ENCODE measurements at regions of chr1 and their contacts with region 1.

Region 1: DNA sequence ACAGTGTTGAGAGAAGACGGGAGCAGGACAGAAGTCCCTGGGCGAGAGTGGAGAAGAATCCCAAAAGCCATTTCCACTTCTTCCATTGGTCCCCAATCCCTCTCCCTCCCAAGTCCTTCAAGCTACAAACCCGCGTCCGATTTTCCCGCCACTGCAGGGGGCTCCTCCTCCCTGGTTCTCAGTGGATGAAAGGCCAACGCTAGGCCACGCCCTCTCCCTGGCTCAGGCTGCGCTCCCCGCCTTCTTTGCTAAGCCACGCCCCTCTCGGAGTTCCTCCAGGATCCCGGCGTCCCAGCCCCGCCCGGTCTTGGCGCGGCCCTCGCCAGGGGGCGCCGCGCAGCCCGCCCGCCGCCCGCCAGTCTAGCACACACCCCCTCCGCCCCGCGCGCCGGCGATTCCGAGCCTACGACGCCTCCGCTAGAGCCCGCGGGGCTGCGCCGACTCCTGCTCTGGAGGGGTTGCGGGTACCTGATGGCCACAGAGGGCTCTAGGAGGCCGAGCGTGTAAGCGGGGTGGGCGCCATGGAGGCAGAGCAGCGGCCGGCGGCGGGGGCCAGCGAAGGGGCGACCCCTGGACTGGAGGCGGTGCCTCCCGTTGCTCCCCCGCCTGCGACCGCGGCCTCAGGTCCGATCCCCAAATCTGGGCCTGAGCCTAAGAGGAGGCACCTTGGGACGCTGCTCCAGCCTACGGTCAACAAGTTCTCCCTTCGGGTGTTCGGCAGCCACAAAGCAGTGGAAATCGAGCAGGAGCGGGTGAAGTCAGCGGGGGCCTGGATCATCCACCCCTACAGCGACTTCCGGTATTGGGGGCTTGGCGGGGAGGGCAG is at the start of gene HCN3:
- DNase-seq: peak; percentile 98 to 99
- H3K4me3 ChIP-seq: peak within 1 kb of the TSS; percentile 87
- H3K4me3 Mint-ChIP-seq: peak within 1 kb of the TSS; percentile 47
- H3K27ac Mint-ChIP-seq: no peak within 1 kb of the TSS
- H3K4me1 ChIP-seq: 0 out of 2 replicates have a peak, but pooled peaks cover 8% of the 10 kb centered on the region
- H3K4me1 Mint-ChIP-seq: peaks cover 25% of the 10 kb centered on the region
- H3K27me3 ChIP-seq: no peaks in the 10 kb centered on the region
- H3K27me3 Mint-ChIP-seq: no peaks in the 10 kb centered on the region
- CTCF ChIP-seq: peak; percentile 47 to 79
- total RNA-seq, gene HCN3: 8.0 and 8.8 TPM in 2 replicates

Region 2: GRCh38 chr1:154982897-154983648 is 294.2 kb before region 1 on chr1 and contains the start of gene FLAD1:
- CTCF ChIA-PET with region 1: no interaction called
- POLR2A ChIA-PET with region 1: no interaction called
- intact Hi-C with region 1: no loop called
- DNase-seq: peak; percentile 98 to 100
- H3K4me3 ChIP-seq: peak within 1 kb of the TSS; percentile 82
- H3K4me3 Mint-ChIP-seq: no peak within 1 kb of the TSS
- H3K27ac Mint-ChIP-seq: no peak within 1 kb of the TSS
- H3K4me1 ChIP-seq: no peaks in the 10 kb centered on the region; the same call in 1 of the 2 replicates
- H3K4me1 Mint-ChIP-seq: no peaks in the 10 kb centered on the region
- H3K27me3 ChIP-seq: no peaks in the 10 kb centered on the region
- H3K27me3 Mint-ChIP-seq: no peaks in the 10 kb centered on the region
- CTCF ChIP-seq: no peak
- total RNA-seq, gene FLAD1: 51.3 and 61.5 TPM in 2 replicates

Region 3: GRCh38 chr1:155172732-155173477 is 104.4 kb before region 1 on chr1 and contains the start of gene KRTCAP2:
- CTCF ChIA-PET with region 1: interaction called, 10 read pairs
- POLR2A ChIA-PET with region 1: no interaction called
- intact Hi-C with region 1: no loop called
- DNase-seq: peak; percentile 94 to 96
- H3K4me3 ChIP-seq: peak within 1 kb of the TSS; percentile 67
- H3K4me3 Mint-ChIP-seq: peak within 1 kb of the TSS; percentile 98
- H3K27ac Mint-ChIP-seq: peak within 1 kb of the TSS; percentile 91
- H3K4me1 ChIP-seq: peaks cover 16% of the 10 kb centered on the region; the same call in 1 of the 2 replicates
- H3K4me1 Mint-ChIP-seq: peaks cover 11% of the 10 kb centered on the region
- H3K27me3 ChIP-seq: no peaks in the 10 kb centered on the region
- H3K27me3 Mint-ChIP-seq: no peaks in the 10 kb centered on the region
- CTCF ChIP-seq: peak; percentile 81 to 93
- total RNA-seq, gene KRTCAP2: 215 and 219 TPM in 2 replicates

Region 4: GRCh38 chr1:155227261-155228095 is 49.8 kb before region 1 on chr1:
- CTCF ChIA-PET with region 1: no interaction called
- POLR2A ChIA-PET with region 1: no interaction called
- intact Hi-C with region 1: no loop called
- DNase-seq: peak; percentile 99
- H3K4me3 ChIP-seq: peak overlapping the region; percentile 62
- H3K4me3 Mint-ChIP-seq: peak overlapping the region; percentile 81
- H3K27ac Mint-ChIP-seq: peak overlapping the region; percentile 80
- H3K4me1 ChIP-seq: peaks cover 22% of the 10 kb centered on the region
- H3K4me1 Mint-ChIP-seq: peaks cover 25% of the 10 kb centered on the region
- H3K27me3 ChIP-seq: no peaks in the 10 kb centered on the region
- H3K27me3 Mint-ChIP-seq: no peaks in the 10 kb centered on the region
- CTCF ChIP-seq: no peak

Region 5: GRCh38 chr1:155250633-155251449 is 26.4 kb before region 1 on chr1:
- CTCF ChIA-PET with region 1: interaction called, 33 read pairs
- POLR2A ChIA-PET with region 1: interaction called, 3 read pairs
- intact Hi-C with region 1: loop called (anchors 1 kb)
- DNase-seq: peak; percentile 92 to 95
- H3K4me3 ChIP-seq: no peak overlapping the region
- H3K4me3 Mint-ChIP-seq: no peak overlapping the region
- H3K27ac Mint-ChIP-seq: peak overlapping the region; percentile 7
- H3K4me1 ChIP-seq: peaks cover 4% of the 10 kb centered on the region; the same call in 1 of the 2 replicates
- H3K4me1 Mint-ChIP-seq: peaks cover 22% of the 10 kb centered on the region
- H3K27me3 ChIP-seq: no peaks in the 10 kb centered on the region
- H3K27me3 Mint-ChIP-seq: no peaks in the 10 kb centered on the region
- CTCF ChIP-seq: peak; percentile 97 to 99

Region 6: DNA sequence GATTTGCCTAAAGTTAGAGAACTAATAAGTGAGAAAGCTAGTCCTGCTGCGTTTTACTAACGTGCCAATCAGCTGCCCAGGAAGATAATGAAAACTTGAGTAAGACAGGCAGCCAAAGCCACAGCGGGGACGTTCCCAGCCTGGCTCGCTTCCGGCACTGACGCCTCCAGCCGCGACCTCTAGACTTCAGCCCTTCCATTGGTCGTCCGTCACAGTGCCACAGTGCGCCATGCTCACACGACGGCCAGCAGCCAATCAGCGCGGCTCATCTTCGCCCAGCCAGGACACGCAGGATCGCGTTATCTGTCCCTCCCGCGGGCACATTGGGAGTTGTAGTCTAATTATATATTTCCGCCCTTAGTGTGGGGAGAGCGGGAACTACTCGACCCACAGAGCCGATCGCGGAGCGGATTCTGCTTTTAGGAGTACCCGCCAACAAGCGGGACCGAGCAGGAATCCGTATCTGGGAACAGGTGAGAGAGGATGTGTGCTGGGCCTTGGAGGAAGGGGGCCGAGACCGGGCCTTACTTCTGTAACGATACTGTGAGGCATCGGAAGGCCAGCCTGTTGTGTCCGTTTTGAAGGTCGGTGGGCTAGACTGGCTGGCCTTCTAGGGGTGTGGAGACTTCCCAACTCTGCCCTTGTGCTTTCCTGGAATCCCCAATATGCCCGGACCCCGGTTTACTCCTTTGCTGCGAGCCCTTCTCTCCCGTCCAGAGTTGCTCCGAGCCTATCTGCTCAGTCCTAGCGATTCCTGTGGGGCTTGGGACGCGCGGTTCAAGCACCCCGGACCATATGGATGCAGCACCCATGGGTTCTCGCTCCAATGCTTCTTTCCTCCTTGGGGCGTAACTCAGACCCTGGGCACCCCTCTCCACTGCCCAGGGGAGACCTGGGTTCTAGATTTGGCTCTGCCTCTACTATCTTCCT is 31.5 kb after region 1 on chr1 and contains the start of gene FDPS:
- CTCF ChIA-PET with region 1: interaction called, 9 read pairs
- POLR2A ChIA-PET with region 1: interaction called, 4 read pairs
- intact Hi-C with region 1: loop called (anchors 1 kb)
- DNase-seq: peak; percentile 97 to 99
- H3K4me3 ChIP-seq: peak within 1 kb of the TSS; percentile 77
- H3K4me3 Mint-ChIP-seq: peak within 1 kb of the TSS; percentile 96
- H3K27ac Mint-ChIP-seq: peak within 1 kb of the TSS; percentile 99
- H3K4me1 ChIP-seq: peaks cover 12% of the 10 kb centered on the region; the same call in 1 of the 2 replicates
- H3K4me1 Mint-ChIP-seq: peaks cover 12% of the 10 kb centered on the region
- H3K27me3 ChIP-seq: no peaks in the 10 kb centered on the region
- H3K27me3 Mint-ChIP-seq: no peaks in the 10 kb centered on the region
- CTCF ChIP-seq: no peak
- total RNA-seq, gene FDPS: 228 and 235 TPM in 2 replicates

Region 7: GRCh38 chr1:155651861-155652661 is 374.8 kb after region 1 on chr1:
- CTCF ChIA-PET with region 1: no interaction called
- POLR2A ChIA-PET with region 1: interaction called, 13 read pairs
- intact Hi-C with region 1: no loop called
- DNase-seq: no peak
- H3K4me3 ChIP-seq: no peak overlapping the region
- H3K4me3 Mint-ChIP-seq: peak overlapping the region; percentile 22
- H3K27ac Mint-ChIP-seq: peak overlapping the region; percentile 85
- H3K4me1 ChIP-seq: peaks cover 12% of the 10 kb centered on the region
- H3K4me1 Mint-ChIP-seq: peaks cover 14% of the 10 kb centered on the region
- H3K27me3 ChIP-seq: no peaks in the 10 kb centered on the region
- H3K27me3 Mint-ChIP-seq: no peaks in the 10 kb centered on the region
- CTCF ChIP-seq: no peak